ENCODE measurements at regions of chr3 and their contacts with region 1.

Region 1: DNA sequence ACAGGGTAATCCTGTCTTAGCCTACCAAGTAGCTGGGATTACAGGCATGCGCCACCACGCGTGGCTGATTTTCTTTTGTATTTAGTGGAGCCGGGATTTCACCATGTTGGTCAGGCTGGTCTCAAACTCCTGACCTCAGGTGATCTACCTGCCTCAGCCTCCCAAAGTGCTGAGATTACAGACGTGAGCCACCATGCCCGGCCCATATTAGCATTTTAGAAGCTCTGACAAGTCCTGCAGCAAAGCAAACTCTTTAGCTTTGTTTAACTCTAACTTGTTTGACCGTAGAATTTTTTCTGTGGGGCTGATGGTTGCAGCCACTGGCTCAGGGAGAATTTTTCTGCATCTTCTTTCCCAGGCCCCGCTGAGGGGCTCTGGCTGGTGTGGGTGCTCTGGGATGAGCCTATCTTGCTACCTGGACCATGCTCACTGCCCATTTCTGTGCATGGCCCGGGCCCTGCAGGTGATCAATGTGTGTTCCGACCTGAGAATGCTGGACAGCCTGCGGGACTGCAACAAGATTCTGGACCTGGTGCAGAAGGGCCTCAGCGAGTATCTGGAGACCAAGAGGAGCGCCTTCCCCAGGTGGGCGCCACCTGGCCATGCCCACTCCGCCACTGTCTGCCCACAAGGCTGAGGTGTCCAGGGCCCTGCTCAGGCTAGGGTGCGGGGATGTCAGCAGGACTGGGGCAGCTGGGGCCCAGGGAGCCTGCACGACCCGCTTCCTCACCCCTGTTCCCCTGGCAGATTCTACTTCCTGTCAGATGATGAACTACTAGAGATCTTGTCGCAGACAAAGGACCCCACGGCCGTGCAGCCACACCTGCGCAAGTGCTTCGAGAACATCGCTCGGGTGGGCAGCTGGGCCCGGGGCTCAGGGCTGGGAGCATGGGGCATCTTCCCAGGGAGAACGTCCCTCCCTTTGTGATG is 41.3 kb downstream of the DNAH1 start:
- DNase-seq: no peak
- H3K4me3 ChIP-seq: no peak overlapping the region
- H3K27ac ChIP-seq: no peak overlapping the region
- H3K4me1 ChIP-seq: no peaks in the 10 kb centered on the region; a peak in 1 of 7 replicates
- H3K27me3 ChIP-seq: no peaks in the 10 kb centered on the region
- CTCF ChIP-seq: no peak
- EP300 ChIP-seq: no peak
- POLR2A ChIP-seq: no peak
- RAD21 ChIP-seq: no peak

Region 2: GRCh38 chr3:52310861-52311575 is 46.4 kb before region 1 on chr3:
- CTCF ChIA-PET with region 1: no interaction called
- POLR2A ChIA-PET with region 1: no interaction called
- DNase-seq: no peak
- H3K4me3 ChIP-seq: no peak overlapping the region
- H3K27ac ChIP-seq: no peak overlapping the region
- H3K4me1 ChIP-seq: no peaks in the 10 kb centered on the region; a peak in 1 of 7 replicates
- H3K27me3 ChIP-seq: peaks cover 0 to 3% (median 0%) of the 10 kb centered on the region in 4 experiments; a peak in 1 of 7 replicates
- CTCF ChIP-seq: no peak
- EP300 ChIP-seq: no peak
- POLR2A ChIP-seq: no peak
- RAD21 ChIP-seq: no peak

Region 3: GRCh38 chr3:52372822-52373504 is 15.5 kb after region 1 on chr3:
- CTCF ChIA-PET with region 1: interaction called, 55 read pairs
- POLR2A ChIA-PET with region 1: interaction called, 8 read pairs
- DNase-seq: peak in 1 of 2 experiments; percentile 81
- H3K4me3 ChIP-seq: peak overlapping the region in 2 of 4 experiments; percentile 16 to 56; a peak in 5 of 8 replicates
- H3K27ac ChIP-seq: no peak overlapping the region
- H3K4me1 ChIP-seq: peaks cover 0 to 15% (median 5%) of the 10 kb centered on the region in 4 experiments; a peak in 4 of 7 replicates
- H3K27me3 ChIP-seq: peaks cover 0 to 1% (median 0%) of the 10 kb centered on the region in 4 experiments; a peak in 3 of 7 replicates
- CTCF ChIP-seq: peak in 1 of 3 experiments; percentile 35; a peak in 1 of 4 replicates
- EP300 ChIP-seq: no peak
- POLR2A ChIP-seq: no peak
- RAD21 ChIP-seq: no peak

Measured in H1 (cell line).